OCI-LY7 (cell line): ENCODE measurements at regions of chr16 and their contacts with region 1.

Region 1: DNA sequence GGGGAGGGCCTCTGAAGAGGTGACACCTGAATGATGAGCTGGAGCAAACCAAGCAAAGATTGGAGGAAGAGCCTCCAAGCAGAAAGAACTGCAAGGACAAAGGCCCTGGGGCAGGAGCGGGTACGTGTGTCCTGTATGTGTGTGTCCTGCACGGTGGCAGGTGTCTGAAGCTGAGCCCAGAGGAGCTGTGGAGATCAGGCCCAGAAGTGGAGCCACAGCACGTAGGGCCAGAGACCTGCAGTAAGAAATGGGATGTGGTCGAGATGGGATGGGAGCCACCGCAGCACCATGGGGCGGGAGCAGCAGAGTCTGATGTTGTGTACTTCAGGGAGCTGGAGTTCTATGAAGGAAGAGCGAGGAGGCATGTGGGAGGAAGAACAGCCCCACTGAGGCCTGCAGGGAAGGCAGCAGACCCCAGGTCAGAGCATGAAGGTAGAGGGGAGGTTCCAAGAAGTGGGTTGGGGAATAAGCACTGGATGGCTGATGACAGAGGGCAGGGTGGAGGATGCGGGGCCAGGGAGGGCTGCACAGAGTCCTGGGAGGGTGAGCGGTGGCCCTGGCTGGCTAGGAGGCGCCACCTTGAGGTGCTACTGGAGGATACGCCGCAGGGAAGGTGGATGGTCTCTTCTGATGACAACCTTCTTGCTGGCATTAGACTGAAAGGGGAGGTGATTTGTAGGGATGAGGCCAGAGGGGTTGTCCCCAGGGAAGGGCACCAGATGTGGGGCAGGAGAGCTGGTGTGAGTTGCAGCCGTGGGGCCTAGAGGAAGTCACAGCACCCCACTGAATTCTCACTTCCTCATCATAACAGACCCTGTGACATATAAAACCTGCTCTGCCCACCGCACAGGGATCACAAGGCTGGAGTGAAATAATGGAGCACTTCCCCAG is 10.6 kb upstream of the CETP start:
- DNase-seq: peak; percentile 90
- H3K4me3 ChIP-seq: peak overlapping the region; percentile 27
- H3K27ac ChIP-seq: peak overlapping the region; percentile 72
- H3K4me1 ChIP-seq: peaks cover 36% of the 10 kb centered on the region
- CTCF ChIP-seq: peak; percentile 89

Region 2: DNA sequence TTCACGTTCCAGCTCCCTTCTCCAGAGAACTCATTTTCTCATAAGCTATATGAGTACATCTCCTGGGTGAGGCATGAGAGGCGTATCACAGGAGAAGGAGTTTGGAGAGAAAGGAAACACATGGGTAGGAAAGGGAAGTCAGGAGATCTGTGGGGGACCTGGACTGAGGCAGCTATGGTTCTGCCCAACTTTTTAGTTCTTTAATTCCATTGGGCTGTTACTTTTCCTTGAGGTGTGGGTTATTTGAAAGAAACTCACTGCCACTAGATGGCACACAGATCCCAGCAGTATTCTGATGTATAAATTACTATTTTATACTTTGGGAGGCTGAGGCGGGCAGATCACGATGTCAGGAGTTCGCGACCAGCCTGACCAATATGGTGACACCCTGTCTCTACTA is 157.6 kb before region 1 on chr16:
- CTCF ChIA-PET with region 1: no interaction called
- POLR2A ChIA-PET with region 1: no interaction called
- intact Hi-C with region 1: loop called (anchors 1 kb)
- DNase-seq: peak; percentile 52
- H3K4me3 ChIP-seq: no peak overlapping the region
- H3K27ac ChIP-seq: no peak overlapping the region
- H3K4me1 ChIP-seq: no peaks in the 10 kb centered on the region
- CTCF ChIP-seq: peak; percentile 77

Region 3: GRCh38 chr16:56860226-56861020 is 90.7 kb before region 1 on chr16:
- CTCF ChIA-PET with region 1: interaction called, 5 read pairs
- POLR2A ChIA-PET with region 1: interaction called, 10 read pairs
- intact Hi-C with region 1: no loop called
- DNase-seq: peak; percentile 85
- H3K4me3 ChIP-seq: peak overlapping the region; percentile 48
- H3K27ac ChIP-seq: peak overlapping the region; percentile 85
- H3K4me1 ChIP-seq: peaks cover 47% of the 10 kb centered on the region
- CTCF ChIP-seq: no peak

Region 4: GRCh38 chr16:56866943-56867830 is 83.9 kb before region 1 on chr16:
- CTCF ChIA-PET with region 1: interaction called, 12 read pairs
- POLR2A ChIA-PET with region 1: interaction called, 7 read pairs
- intact Hi-C with region 1: loop called (anchors 1 kb)
- DNase-seq: peak; percentile 82
- H3K4me3 ChIP-seq: no peak overlapping the region
- H3K27ac ChIP-seq: no peak overlapping the region
- H3K4me1 ChIP-seq: peaks cover 44% of the 10 kb centered on the region
- CTCF ChIP-seq: peak; percentile 96

Region 5: GRCh38 chr16:56877486-56878182 is 73.5 kb before region 1 on chr16:
- CTCF ChIA-PET with region 1: no interaction called
- POLR2A ChIA-PET with region 1: no interaction called
- intact Hi-C with region 1: no loop called
- DNase-seq: no peak
- H3K4me3 ChIP-seq: no peak overlapping the region
- H3K27ac ChIP-seq: no peak overlapping the region
- H3K4me1 ChIP-seq: peaks cover 15% of the 10 kb centered on the region
- CTCF ChIP-seq: no peak

Region 6: GRCh38 chr16:56911771-56912571 is 39.2 kb before region 1 on chr16:
- CTCF ChIA-PET with region 1: no interaction called
- POLR2A ChIA-PET with region 1: interaction called, 11 read pairs
- intact Hi-C with region 1: loop called (anchors 2 kb)
- DNase-seq: peak; percentile 88
- H3K4me3 ChIP-seq: peak overlapping the region; percentile 46
- H3K27ac ChIP-seq: peak overlapping the region; percentile 84
- H3K4me1 ChIP-seq: peaks cover 78% of the 10 kb centered on the region
- CTCF ChIP-seq: no peak

Region 7: GRCh38 chr16:56964243-56965148 is 13.4 kb after region 1 on chr16:
- CTCF ChIA-PET with region 1: interaction called, 3 read pairs
- POLR2A ChIA-PET with region 1: interaction called, 11 read pairs
- intact Hi-C with region 1: no loop called
- DNase-seq: peak; percentile 96
- H3K4me3 ChIP-seq: no peak overlapping the region
- H3K27ac ChIP-seq: peak overlapping the region; percentile 16
- H3K4me1 ChIP-seq: peaks cover 21% of the 10 kb centered on the region
- CTCF ChIP-seq: peak; percentile 100

Region 8: DNA sequence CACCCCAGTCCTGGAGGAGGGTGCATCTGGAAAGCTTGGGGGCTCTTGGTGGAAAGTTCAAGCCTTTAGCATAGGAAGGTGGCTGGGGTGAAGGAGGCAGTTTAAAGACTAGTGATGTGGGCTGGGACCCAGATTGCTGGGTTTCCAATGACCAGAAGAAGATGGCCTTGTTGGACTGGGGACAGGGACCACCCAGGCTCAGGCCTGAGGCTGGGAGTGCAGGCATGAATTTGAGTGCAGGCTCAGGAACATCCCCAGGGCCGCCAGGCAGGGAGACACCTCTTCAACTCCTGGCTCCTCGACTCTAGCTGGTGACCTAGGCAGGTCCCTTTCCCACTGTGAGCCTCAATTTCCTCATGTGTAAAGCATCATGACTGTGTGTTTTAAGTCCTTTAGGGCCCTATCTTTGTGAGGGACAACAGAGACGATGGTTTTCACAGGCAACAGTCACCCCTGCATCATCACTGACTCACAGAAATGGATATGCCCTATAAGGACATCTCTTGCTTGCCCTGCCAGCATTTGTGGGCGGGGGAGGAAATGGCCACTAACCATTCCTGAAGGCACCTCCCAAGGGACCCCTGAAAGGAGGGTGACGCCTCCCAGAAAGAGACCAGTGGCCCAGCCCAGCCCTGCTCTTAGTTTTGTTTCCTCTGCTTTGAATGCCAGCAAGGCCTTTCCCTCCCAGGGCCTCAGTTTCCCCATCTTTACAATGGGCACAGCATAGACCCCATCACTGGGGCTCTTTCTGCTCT is 49.3 kb after region 1 on chr16:
- CTCF ChIA-PET with region 1: no interaction called
- POLR2A ChIA-PET with region 1: no interaction called
- intact Hi-C with region 1: no loop called
- DNase-seq: no peak
- H3K4me3 ChIP-seq: no peak overlapping the region
- H3K27ac ChIP-seq: peak overlapping the region; percentile 21
- H3K4me1 ChIP-seq: peaks cover 53% of the 10 kb centered on the region
- CTCF ChIP-seq: no peak

Region 9: GRCh38 chr16:57045694-57046381 is 94.7 kb after region 1 on chr16:
- CTCF ChIA-PET with region 1: no interaction called
- POLR2A ChIA-PET with region 1: no interaction called
- intact Hi-C with region 1: no loop called
- DNase-seq: peak; percentile 92
- H3K4me3 ChIP-seq: peak overlapping the region; percentile 51
- H3K27ac ChIP-seq: peak overlapping the region; percentile 98
- H3K4me1 ChIP-seq: peaks cover 76% of the 10 kb centered on the region
- CTCF ChIP-seq: peak; percentile 89

Region 10: GRCh38 chr16:57653936-57654335 is 702.8 kb after region 1 on chr16:
- CTCF ChIA-PET with region 1: no interaction called
- POLR2A ChIA-PET with region 1: no interaction called
- intact Hi-C with region 1: no loop called
- DNase-seq: no peak
- H3K4me3 ChIP-seq: no peak overlapping the region
- H3K27ac ChIP-seq: no peak overlapping the region
- H3K4me1 ChIP-seq: no peaks in the 10 kb centered on the region
- CTCF ChIP-seq: no peak